Tibial artery (tissue), 4 donors: ENCODE measurements at regions of chr19 and their contacts with region 1.

Region 1: GRCh38 chr19:49196527-49197240 is 39.1 kb downstream of the TRPM4 start:
- DNase-seq: peak in 1 of 2 donors; percentile 73
- H3K4me3 ChIP-seq: peak overlapping the region; percentile 19 to 31
- H3K27ac ChIP-seq: peak overlapping the region; percentile 2 to 61
- H3K4me1 ChIP-seq: peaks cover 0 to 11% (median 5%) of the 10 kb centered on the region in 4 donors
- H3K27me3 ChIP-seq: no peaks in the 10 kb centered on the region
- CTCF ChIP-seq: no peak

Region 2: DNA sequence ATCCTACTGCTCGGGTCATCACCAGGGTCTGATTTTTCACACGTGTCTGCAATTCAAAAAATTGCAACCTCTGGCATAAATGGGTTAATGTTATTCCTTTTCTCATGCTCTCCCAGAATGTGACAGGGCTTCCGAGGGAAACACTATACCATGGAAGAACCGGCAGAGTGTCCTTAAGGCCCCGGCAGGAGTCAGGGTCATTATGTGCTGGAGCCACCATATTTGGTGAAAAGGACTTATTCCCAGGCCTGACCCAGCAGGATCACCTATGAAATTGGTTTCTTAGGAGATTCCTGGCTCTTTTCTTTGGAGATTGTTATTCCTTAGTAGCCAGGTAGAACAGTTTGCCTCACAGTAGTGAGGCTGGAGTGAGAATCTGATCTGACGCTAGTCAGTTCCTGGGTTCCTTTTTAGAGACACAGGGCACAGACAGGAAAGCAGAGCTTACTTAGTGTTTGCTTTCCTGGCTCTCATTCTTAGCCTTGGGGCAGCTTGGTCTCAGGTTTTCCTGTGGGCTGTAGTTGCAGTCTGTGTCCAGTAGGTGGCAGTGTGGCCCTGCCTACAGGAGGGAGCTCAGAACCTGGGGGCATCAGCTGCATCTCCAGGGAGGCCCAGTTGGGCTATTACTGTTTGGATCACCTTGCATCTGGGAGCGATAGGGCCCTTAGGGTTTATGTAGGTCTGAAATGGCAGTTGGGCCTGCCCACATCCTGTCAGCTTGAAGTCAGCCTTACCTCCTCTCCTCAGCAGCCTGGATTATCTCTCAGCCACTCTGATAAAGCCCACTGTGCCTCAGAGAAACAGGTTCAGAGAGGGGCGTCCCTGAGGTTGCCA is 99.0 kb before region 1 on chr19:
- intact Hi-C with region 1: loop called (anchors 5 kb)
- DNase-seq: peak; percentile 52 to 79
- H3K4me3 ChIP-seq: no peak overlapping the region
- H3K27ac ChIP-seq: no peak overlapping the region
- H3K4me1 ChIP-seq: peaks cover 0 to 7% (median 0%) of the 10 kb centered on the region in 4 donors
- H3K27me3 ChIP-seq: no peaks in the 10 kb centered on the region
- CTCF ChIP-seq: peak; percentile 97 to 99